PC-3 (cell line): ENCODE measurements at regions of chr2 and their contacts with region 1.

Region 1: DNA sequence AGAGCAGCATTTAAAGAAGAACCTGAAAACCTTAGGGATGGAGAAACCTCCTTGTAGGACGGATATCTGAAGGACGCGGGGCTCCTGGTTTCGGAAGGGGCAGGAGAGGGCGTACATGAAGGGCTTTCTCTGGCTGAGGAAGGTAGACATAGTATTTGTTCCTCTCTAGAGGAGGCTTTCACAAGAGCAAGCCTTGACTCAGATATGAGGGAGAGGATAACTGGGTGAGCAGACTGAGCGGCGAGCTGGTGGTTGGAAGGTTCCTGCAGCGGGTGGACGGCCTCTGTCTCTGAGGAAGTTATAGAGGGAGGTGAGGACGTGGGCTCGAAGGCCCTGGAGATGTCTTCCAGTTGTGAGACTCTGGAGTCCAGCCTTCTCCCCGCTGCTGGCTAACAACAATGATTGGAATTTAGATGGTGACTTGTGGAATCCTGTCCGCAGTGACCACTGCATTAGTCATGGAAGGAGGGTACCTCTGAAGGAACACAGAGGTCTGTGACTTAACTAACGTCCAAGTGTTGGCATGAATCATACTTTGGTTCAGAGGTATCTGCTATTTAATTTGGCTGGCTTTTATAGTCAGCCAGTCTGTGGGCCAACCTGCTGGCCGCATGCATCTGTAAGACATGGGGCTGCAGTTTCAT is 80.9 kb downstream of the ASAP2 start:
- DNase-seq: peak; percentile 99
- ATAC-seq: peak; percentile 83
- H3K4me3 ChIP-seq: peak overlapping the region; percentile 34
- H3K27ac ChIP-seq: peak overlapping the region; percentile 98
- H3K4me1 ChIP-seq: peaks cover 64% of the 10 kb centered on the region
- H3K27me3 ChIP-seq: no peaks in the 10 kb centered on the region
- CTCF ChIP-seq: 0 out of 2 replicates have a peak, but pooled peaks have one; percentile 34

Region 2: DNA sequence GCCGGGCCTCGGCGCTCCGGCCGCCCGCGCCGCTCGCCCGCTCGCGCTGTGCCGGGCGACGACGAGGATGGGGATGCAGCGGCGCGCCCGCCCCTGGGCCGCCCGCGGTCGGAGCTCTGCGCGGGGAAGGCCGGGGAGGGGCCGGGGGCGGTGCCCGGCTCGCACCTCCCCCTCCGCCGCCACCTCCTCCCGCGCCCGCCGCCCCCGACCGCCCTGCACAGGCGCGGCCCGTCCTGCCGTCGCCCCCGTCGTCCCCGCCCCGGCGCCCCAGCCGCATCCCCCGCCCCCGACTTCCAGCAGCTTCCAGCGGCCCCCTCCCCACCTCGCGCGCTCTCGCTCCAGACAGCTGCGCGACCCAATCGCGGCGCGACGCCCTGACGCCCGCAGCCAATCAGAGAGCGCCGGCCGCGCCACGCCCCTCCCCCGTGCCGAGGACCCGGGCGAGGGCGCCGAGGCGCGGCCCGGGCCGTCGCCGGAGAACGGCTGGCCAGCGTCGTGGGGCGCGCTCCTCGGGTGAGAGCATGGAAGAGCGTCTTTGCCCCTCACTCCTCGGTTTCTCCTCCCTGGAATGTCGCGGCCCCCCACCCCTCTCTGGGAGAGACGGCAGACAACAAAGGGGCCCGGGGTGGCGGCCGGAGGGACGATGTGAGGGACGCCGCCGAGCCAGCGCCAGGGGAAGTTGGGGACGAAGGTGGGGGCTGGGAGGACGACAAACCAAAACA is 283.7 kb before region 1 on chr2 and contains the start of gene MBOAT2:
- CTCF ChIA-PET with region 1: no interaction called
- POLR2A ChIA-PET with region 1: no interaction called
- intact Hi-C with region 1: loop called (anchors 1 kb)
- DNase-seq: peak; percentile 86
- ATAC-seq: peak; percentile 63
- H3K4me3 ChIP-seq: peak within 1 kb of the TSS; percentile 91
- H3K27ac ChIP-seq: peak within 1 kb of the TSS; percentile 87
- H3K4me1 ChIP-seq: peaks cover 40% of the 10 kb centered on the region
- H3K27me3 ChIP-seq: no peaks in the 10 kb centered on the region
- CTCF ChIP-seq: no peak
- total RNA-seq, gene MBOAT2: 26.8 and 30.7 TPM in 2 replicates

Region 3: GRCh38 chr2:9178904-9179571 is 108.5 kb before region 1 on chr2:
- CTCF ChIA-PET with region 1: no interaction called
- POLR2A ChIA-PET with region 1: no interaction called
- intact Hi-C with region 1: loop called (anchors 1 kb)
- DNase-seq: peak; percentile 92
- ATAC-seq: peak; percentile 64
- H3K4me3 ChIP-seq: peak overlapping the region; percentile 55
- H3K27ac ChIP-seq: peak overlapping the region; percentile 97
- H3K4me1 ChIP-seq: peaks cover 52% of the 10 kb centered on the region
- H3K27me3 ChIP-seq: no peaks in the 10 kb centered on the region
- CTCF ChIP-seq: no peak

Region 4: DNA sequence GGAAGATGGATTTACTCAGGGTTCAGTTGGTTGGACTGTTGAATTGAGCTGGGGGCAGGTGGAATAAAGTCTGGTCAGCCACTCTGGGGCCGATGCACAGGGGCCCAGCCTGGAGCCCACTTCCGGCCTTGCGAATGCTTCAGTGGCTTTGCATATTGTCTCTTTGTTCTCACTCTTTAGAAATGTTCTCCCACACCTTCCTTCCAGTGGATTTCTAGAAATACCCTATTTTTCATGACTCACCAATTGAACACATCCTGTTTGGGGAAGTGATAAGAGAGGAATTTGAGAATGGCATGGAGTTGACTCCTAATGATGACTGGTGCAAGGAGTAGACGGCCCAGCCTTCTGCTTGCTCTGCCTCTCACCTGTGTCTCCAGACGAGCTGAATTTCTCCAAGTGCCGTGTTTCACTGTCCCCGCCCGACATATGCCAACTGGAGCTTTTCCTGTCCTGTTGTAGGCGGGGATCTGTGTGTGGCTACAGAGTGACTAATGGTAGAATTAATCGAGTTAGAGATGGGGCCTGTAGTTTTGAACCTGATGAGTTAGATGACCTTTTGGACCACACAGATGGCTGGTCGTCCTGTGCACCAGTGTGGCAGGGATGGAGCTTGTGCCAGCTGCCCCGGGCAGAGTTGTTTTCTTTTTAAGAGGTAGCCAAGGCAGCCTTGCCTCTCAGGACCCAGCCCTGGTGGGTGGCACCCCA is 52.7 kb before region 1 on chr2:
- CTCF ChIA-PET with region 1: no interaction called
- POLR2A ChIA-PET with region 1: interaction called, 3 read pairs
- intact Hi-C with region 1: loop called (anchors 1 kb)
- DNase-seq: peak; percentile 96
- ATAC-seq: peak; percentile 87
- H3K4me3 ChIP-seq: peak overlapping the region; percentile 33
- H3K27ac ChIP-seq: peak overlapping the region; percentile 96
- H3K4me1 ChIP-seq: peaks cover 73% of the 10 kb centered on the region
- H3K27me3 ChIP-seq: no peaks in the 10 kb centered on the region
- CTCF ChIP-seq: no peak

Region 5: GRCh38 chr2:9310377-9310776 is 22.9 kb after region 1 on chr2:
- CTCF ChIA-PET with region 1: no interaction called
- POLR2A ChIA-PET with region 1: interaction called, 8 read pairs
- intact Hi-C with region 1: loop called (anchors 1 kb)
- DNase-seq: peak; percentile 81
- ATAC-seq: peak; percentile 70
- H3K4me3 ChIP-seq: peak overlapping the region; percentile 16; the same call in 1 of the 2 replicates
- H3K27ac ChIP-seq: peak overlapping the region; percentile 89
- H3K4me1 ChIP-seq: peaks cover 62% of the 10 kb centered on the region
- H3K27me3 ChIP-seq: no peaks in the 10 kb centered on the region
- CTCF ChIP-seq: no peak

Region 6: DNA sequence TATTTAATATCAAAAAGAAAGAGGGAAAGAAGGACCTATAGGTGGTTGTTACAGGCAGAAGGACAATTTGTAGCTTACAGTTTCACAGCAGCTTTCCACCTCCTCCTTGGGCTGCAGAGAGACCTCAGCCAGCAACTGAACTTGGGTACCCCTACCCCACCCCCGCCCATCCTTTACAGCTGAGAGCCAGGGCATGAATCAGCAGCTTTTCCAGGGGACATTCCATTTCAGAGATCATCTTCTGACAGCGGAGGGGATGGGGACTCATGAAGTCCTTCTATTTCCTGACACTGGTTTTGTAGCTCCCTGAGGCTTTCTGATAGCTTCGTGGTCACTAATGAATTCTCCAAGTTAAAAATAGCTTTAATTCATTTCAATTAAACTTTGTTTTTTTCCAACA is 39.5 kb after region 1 on chr2:
- CTCF ChIA-PET with region 1: no interaction called
- POLR2A ChIA-PET with region 1: no interaction called
- intact Hi-C with region 1: no loop called
- DNase-seq: no peak
- ATAC-seq: no peak
- H3K4me3 ChIP-seq: no peak overlapping the region
- H3K27ac ChIP-seq: no peak overlapping the region
- H3K4me1 ChIP-seq: peaks cover 14% of the 10 kb centered on the region
- H3K27me3 ChIP-seq: no peaks in the 10 kb centered on the region
- CTCF ChIP-seq: no peak

Region 7: GRCh38 chr2:9385841-9386240 is 98.3 kb after region 1 on chr2:
- CTCF ChIA-PET with region 1: no interaction called
- POLR2A ChIA-PET with region 1: no interaction called
- intact Hi-C with region 1: loop called (anchors 1 kb)
- DNase-seq: no peak
- ATAC-seq: no peak
- H3K4me3 ChIP-seq: no peak overlapping the region
- H3K27ac ChIP-seq: peak overlapping the region; percentile 80
- H3K4me1 ChIP-seq: peaks cover 48% of the 10 kb centered on the region
- H3K27me3 ChIP-seq: no peaks in the 10 kb centered on the region
- CTCF ChIP-seq: no peak

Region 8: DNA sequence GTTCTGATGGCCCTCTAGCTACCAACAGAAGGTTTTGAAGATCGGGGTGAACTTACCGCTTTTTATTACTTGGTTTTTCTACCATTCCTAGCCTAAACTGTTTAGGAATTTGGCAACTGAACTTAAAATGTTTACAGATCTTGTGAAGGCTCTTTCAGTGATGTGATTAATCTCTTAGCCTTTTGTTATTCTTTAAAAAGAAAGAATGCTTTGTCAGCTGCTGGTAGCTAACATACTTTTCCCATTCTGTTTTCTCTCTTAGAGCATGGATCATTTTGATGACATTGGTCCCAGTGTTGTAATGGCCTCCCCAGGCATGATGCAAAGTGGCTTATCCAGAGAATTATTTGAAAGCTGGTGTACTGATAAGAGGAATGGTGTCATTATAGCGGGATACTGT is 154.0 kb after region 1 on chr2:
- CTCF ChIA-PET with region 1: no interaction called
- POLR2A ChIA-PET with region 1: no interaction called
- intact Hi-C with region 1: no loop called
- DNase-seq: no peak
- ATAC-seq: no peak
- H3K4me3 ChIP-seq: no peak overlapping the region
- H3K27ac ChIP-seq: no peak overlapping the region
- H3K4me1 ChIP-seq: 0 out of 2 replicates have a peak, but pooled peaks cover 4% of the 10 kb centered on the region
- H3K27me3 ChIP-seq: no peaks in the 10 kb centered on the region
- CTCF ChIP-seq: no peak